Ascending aorta (tissue), 2 donors: ENCODE measurements at regions of chr10 and their contacts with region 1.

Region 1: GRCh38 chr10:70233109-70233938 is at the start of gene PPA1:
- DNase-seq: peak; percentile 95 to 99
- H3K4me3 ChIP-seq: peak within 1 kb of the TSS; percentile 84 to 95
- H3K27ac ChIP-seq: peak within 1 kb of the TSS; percentile 68 to 72
- H3K4me1 ChIP-seq: peaks cover 0 to 8% of the 10 kb centered on the region in 2 donors
- H3K27me3 ChIP-seq: no peaks in the 10 kb centered on the region
- CTCF ChIP-seq: peak; percentile 12 to 21 (median 15)
- total RNA-seq, gene PPA1: 66.4 TPM

Region 2: DNA sequence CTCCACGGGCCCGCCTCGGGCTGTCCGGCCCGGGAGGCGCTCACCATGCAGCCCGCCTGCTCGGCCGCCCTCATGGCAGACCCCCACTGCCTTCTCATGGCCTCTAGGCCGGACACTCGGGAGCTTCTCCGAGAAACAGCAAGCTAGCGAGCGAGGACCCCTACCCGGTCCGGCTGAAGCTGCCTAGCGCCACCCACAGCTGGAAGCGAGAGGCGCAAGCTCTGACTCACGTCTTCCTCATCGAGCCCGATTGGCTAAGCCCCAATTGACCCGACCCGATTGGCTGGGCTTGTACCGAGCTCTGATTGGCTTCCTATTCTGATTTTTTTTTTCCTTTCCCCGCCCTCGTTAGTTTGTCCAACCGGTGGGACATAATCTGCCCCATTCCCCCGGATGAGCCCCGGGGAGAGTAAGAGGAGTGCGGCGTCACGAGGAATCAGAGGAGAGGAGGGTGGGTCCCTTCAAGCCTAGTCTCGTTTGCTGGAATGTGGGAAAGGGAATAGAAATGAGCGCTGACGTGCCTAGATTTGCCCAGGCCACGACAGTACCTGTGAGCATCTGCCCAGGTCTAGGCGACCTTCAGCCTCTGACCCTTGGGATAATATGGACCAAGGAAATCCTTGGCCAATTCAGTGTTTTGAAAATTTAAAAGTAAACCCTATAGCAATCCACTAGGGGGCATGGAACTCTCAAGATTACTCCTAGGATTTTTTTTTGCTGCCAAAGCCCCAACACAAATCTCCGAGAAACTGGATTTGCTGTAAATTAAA is 86.7 kb before region 1 on chr10 and contains the start of gene TYSND1:
- intact Hi-C with region 1: loop called (anchors 5 kb)
- DNase-seq: peak; percentile 87 to 98
- H3K4me3 ChIP-seq: peak within 1 kb of the TSS; percentile 87 to 95
- H3K27ac ChIP-seq: peak within 1 kb of the TSS; percentile 87 to 88
- H3K4me1 ChIP-seq: peaks cover 0 to 16% of the 10 kb centered on the region in 2 donors
- H3K27me3 ChIP-seq: no peaks in the 10 kb centered on the region
- CTCF ChIP-seq: peak; percentile 67 to 88 (median 79)
- total RNA-seq, gene TYSND1: 12.3 TPM

Region 3: DNA sequence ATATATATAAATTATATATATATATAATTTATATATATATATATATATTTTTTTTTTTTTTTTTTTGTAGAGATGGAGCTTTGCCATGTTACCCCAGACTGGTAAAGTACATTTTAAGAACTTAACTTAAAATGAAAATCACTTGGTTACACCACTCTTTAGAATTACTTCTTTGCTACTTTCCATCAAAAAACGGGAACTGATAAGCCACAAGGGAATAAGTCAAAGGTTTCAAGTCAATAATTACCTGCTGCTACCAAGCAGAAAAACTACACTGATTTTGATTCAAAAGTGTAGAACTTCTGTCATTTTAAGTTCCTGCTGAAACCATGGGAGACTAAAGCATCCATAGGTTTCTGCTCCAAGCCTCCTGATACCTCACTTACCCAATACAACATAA is 12.3 kb before region 1 on chr10:
- intact Hi-C with region 1: loop called (anchors 1 kb)
- DNase-seq: no peak
- H3K4me3 ChIP-seq: peak overlapping the region in 1 of 2 donors; percentile 33
- H3K27ac ChIP-seq: peak overlapping the region in 1 of 2 donors; percentile 19
- H3K4me1 ChIP-seq: peaks cover 0 to 2% of the 10 kb centered on the region in 2 donors
- H3K27me3 ChIP-seq: no peaks in the 10 kb centered on the region
- CTCF ChIP-seq: no peak

Region 4: GRCh38 chr10:70363971-70364771 is 130.8 kb after region 1 on chr10:
- intact Hi-C with region 1: loop called (anchors 1 kb)
- DNase-seq: peak; percentile 75 to 97
- H3K4me3 ChIP-seq: peak overlapping the region; percentile 25 to 49
- H3K27ac ChIP-seq: peak overlapping the region; percentile 91 to 95
- H3K4me1 ChIP-seq: peaks cover 0 to 15% of the 10 kb centered on the region in 2 donors
- H3K27me3 ChIP-seq: no peaks in the 10 kb centered on the region
- CTCF ChIP-seq: peak; percentile 91 to 96 (median 94)

Region 5: GRCh38 chr10:70404036-70404786 is 170.9 kb after region 1 on chr10 and contains the start of gene EIF4EBP2:
- intact Hi-C with region 1: loop called (anchors 1 kb)
- DNase-seq: peak; percentile 86 to 99
- H3K4me3 ChIP-seq: peak within 1 kb of the TSS; percentile 84 to 96
- H3K27ac ChIP-seq: peak within 1 kb of the TSS; percentile 98 to 100
- H3K4me1 ChIP-seq: peaks cover 6 to 25% of the 10 kb centered on the region in 2 donors
- H3K27me3 ChIP-seq: no peaks in the 10 kb centered on the region
- CTCF ChIP-seq: no peak
- total RNA-seq, gene EIF4EBP2: 35.4 TPM